Heart right ventricle (tissue), 16 donors: ENCODE measurements at regions of chr22 and their contacts with region 1.

Region 1: GRCh38 chr22:42649246-42650099 is at the start of gene CYB5R3:
- DNase-seq: peak; percentile 87 to 88
- ATAC-seq: peak; percentile 58 to 79 (median 70)
- H3K4me3 ChIP-seq: peak within 1 kb of the TSS; percentile 81 to 99 (median 92)
- H3K27ac ChIP-seq: peak within 1 kb of the TSS; percentile 94 to 99 (median 96)
- H3K4me1 ChIP-seq: peaks cover 31 to 48% (median 45%) of the 10 kb centered on the region in 9 donors
- H3K27me3 ChIP-seq: no peaks in the 10 kb centered on the region
- CTCF ChIP-seq: peak in 2 of 9 donors; percentile 28 to 42
- total RNA-seq, gene CYB5R3: 261 to 633 (median 312) TPM

Region 2: GRCh38 chr22:42614312-42615091 is 35.0 kb before region 1 on chr22 and contains the start of gene POLDIP3:
- intact Hi-C with region 1: loop called in 2 of 10 experiments (anchors 2 kb)
- DNase-seq: peak; percentile 99
- ATAC-seq: peak; percentile 87 to 95 (median 93)
- H3K4me3 ChIP-seq: peak within 1 kb of the TSS; percentile 57 to 93 (median 84)
- H3K27ac ChIP-seq: peak within 1 kb of the TSS; percentile 79 to 99 (median 97)
- H3K4me1 ChIP-seq: peaks cover 10 to 70% (median 61%) of the 10 kb centered on the region in 9 donors
- H3K27me3 ChIP-seq: no peaks in the 10 kb centered on the region
- CTCF ChIP-seq: peak in 6 of 9 donors; percentile 25 to 54 (median 40)
- total RNA-seq, gene POLDIP3: 27.2 to 42.6 (median 33.6) TPM

Region 3: GRCh38 chr22:42805016-42805997 is 155.8 kb after region 1 on chr22:
- intact Hi-C with region 1: loop called in 1 of 10 experiments (anchors 10 kb)
- DNase-seq: peak in 1 of 2 donors; percentile 61
- ATAC-seq: peak; percentile 43 to 62 (median 55)
- H3K4me3 ChIP-seq: no peak overlapping the region
- H3K27ac ChIP-seq: peak overlapping the region; percentile 31 to 86 (median 69)
- H3K4me1 ChIP-seq: peaks cover 15 to 46% (median 36%) of the 10 kb centered on the region in 9 donors
- H3K27me3 ChIP-seq: no peaks in the 10 kb centered on the region
- CTCF ChIP-seq: no peak

Region 4: DNA sequence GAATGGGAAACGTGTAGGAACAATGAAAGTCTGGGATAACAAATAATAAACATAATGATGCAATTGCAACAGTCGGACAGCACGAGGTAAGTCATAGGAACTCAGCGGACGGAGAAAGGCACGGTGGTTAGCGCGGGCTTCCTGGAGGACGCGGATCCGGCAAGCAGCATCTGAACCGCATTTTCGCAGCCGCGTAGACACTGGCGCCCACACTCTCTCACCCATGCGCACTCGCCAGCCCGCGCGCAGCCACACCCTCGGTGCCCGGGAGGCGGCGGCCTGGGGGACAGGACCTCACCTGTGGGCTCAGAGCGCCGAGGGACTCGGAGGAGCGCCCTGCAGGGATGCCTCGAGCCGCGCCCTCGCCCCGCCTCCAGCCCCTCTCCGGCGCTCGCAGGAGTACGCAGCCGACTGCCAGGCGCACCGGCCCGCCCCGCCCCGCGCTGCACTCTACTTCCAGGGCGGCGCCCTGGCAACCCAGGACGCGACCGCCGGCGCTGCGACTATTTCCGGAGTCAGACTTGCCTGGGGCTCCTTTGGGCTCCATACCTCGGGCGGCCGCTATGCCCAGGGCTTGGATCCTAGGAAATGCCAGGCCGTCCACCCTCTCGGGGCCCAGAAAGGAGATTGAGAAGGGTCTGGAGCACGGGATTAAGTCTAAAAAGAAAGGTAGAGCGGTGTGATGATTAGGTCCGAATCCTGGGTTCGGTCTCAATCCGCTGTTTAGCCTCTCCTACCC is 439.7 kb after region 1 on chr22 and contains the start of gene TTLL1:
- intact Hi-C with region 1: loop called in 1 of 10 experiments (anchors 10 kb)
- DNase-seq: peak; percentile 88 to 91
- ATAC-seq: peak; percentile 91 to 96 (median 95)
- H3K4me3 ChIP-seq: peak within 1 kb of the TSS; percentile 51 to 100 (median 80)
- H3K27ac ChIP-seq: peak within 1 kb of the TSS in 9 of 10 donors; percentile 40 to 83 (median 71)
- H3K4me1 ChIP-seq: peaks cover 0 to 37% (median 15%) of the 10 kb centered on the region in 9 donors
- H3K27me3 ChIP-seq: no peaks in the 10 kb centered on the region
- CTCF ChIP-seq: peak in 3 of 9 donors; percentile 6 to 27 (median 14)
- total RNA-seq, gene TTLL1: 7.2 to 14.5 (median 11.0) TPM